Astrocyte of the cerebellum (primary cell): ENCODE measurements at regions of chr11 and their contacts with region 1.

Region 1: GRCh38 chr11:75031771-75032549 is 43.2 kb downstream of the NEU3 start:
- DNase-seq: no peak
- H3K4me3 ChIP-seq: no peak overlapping the region
- CTCF ChIP-seq: peak; percentile 80

Region 2: DNA sequence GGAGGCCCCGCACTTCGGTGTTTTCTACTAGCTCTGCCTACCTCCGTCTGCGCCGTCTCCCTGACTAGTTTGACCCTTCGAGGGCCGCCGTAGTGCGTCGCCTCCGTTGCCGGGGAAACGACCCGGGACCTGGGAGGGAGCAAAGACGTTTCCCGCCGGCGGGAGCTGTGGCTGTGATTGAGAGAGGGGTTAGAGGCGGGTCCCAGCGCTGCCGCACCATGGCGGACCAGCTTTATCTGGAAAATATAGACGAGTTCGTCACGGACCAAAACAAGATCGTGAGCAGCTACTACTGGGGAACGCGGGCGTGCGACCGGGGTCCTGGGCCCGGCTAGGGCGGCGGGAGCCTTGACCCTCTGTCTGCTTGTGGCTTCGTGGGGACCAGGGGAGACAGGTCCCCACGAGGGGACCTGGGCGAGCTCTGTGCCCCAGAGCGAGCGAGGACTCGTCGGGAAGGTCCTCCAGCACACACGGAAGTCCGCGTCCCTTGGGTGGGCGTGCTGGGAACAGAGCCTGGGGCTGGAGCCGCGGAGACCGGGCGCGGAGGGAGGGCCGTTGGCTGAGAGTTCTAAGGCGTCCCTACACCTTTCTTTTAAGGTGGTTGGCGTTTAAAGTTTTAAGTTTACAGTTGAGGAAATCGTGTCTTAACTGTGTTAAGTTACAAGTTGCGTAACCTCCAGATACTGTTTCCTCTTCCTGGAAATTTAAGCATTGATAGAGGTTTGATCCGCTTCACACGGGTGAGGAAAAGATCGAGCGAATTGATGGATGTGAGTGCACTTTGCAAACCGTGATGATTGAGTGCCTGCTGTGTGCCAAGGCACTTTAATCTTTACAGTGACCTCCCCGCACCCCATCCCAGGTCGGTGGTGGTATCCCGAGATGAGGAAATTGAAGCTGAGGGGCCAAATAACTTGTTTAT is 439.3 kb before region 1 on chr11 and contains the start of gene POLD3:
- in situ Hi-C with region 1: no loop called
- DNase-seq: peak; percentile 61
- H3K4me3 ChIP-seq: peak within 1 kb of the TSS; percentile 96
- CTCF ChIP-seq: no peak

Region 3: GRCh38 chr11:74929431-74930363 is 102.3 kb before region 1 on chr11:
- in situ Hi-C with region 1: loop called (anchors 5 kb)
- DNase-seq: peak; percentile 94
- H3K4me3 ChIP-seq: no peak overlapping the region
- CTCF ChIP-seq: peak; percentile 80

Region 4: DNA sequence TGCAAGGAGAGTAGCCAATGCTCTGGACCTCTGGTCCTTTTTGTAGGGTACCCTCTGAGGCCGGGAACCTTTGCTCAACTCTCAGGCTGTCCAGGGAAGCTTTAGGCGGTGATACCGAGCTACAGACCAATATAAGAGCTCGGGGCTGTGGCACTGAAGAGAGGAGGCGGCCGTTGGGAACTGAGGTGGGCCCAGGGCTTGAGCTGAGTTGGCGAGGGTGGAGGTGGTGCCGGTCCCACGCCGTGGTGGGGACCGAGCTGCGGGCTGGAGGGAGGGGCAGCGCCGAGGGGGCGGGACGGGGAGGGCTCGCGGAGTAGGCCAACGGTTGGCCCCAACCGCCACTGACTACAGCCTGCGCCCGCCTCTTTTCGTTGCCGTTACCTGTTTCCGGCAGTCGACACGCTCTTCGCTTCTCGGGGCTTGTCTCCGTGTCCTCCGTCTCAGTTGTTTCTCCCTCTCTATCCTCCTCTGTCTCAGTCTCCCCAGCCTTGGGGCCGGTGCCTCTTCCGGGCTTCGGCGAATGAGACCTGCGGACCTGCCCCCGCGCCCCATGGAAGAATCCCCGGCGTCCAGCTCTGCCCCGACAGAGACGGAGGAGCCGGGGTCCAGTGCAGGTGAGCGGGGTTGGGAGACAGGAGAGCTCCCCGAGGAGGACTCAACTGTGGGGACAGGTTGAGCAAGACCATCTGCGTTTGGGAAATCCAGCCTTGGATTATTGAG is 43.3 kb before region 1 on chr11 and contains the start of gene NEU3:
- in situ Hi-C with region 1: no loop called
- DNase-seq: peak; percentile 33
- H3K4me3 ChIP-seq: peak within 1 kb of the TSS; percentile 67
- CTCF ChIP-seq: no peak